ENCODE measurements at regions of chr13 and their contacts with region 1.

Region 1: DNA sequence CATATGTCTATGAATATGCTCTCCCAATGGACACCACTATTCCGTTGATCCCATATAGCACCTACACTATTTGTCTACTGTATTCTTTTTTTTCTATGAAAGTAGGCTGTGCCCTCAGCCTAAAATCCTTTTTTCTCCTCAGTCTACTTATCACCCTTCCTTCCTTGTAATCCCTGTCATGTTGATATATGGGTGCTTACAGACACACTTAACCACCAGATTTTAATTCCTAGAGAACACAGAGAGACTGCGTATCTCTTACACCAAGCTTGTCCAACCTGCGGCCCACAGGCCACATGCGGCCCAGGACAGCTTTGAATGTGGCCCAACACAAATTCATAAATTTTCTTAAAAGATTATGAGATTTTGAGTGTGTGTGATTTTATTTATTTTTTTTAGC is 101.1 kb downstream of the ZAR1L start:
- DNase-seq: no peak
- CTCF ChIP-seq: no peak

Region 2: GRCh38 chr13:32225481-32225931 is 11.4 kb after region 1 on chr13:
- CTCF ChIA-PET with region 1: interaction called, 12 read pairs
- POLR2A ChIA-PET with region 1: no interaction called
- DNase-seq: no peak
- CTCF ChIP-seq: no peak

Measured in GM10248 (cell line).